ENCODE measurements at regions of chr6 and their contacts with region 1.

Region 1: GRCh38 chr6:40845553-40845952 is 193.5 kb downstream of the UNC5CL start:
- DNase-seq: peak; percentile 59
- H3K4me3 Mint-ChIP-seq: no peak overlapping the region
- H3K27ac Mint-ChIP-seq: no peak overlapping the region
- H3K4me1 Mint-ChIP-seq: no peaks in the 10 kb centered on the region
- H3K27me3 Mint-ChIP-seq: peaks cover 61% of the 10 kb centered on the region
- CTCF ChIP-seq: peak; percentile 66

Region 2: GRCh38 chr6:39361657-39362486 is 1483.7 kb before region 1 on chr6:
- CTCF ChIA-PET with region 1: interaction called, 3 read pairs
- POLR2A ChIA-PET with region 1: no interaction called
- intact Hi-C with region 1: loop called (anchors 5 kb)
- DNase-seq: peak; percentile 70
- H3K4me3 Mint-ChIP-seq: no peak overlapping the region
- H3K27ac Mint-ChIP-seq: no peak overlapping the region
- H3K4me1 Mint-ChIP-seq: peaks cover 14% of the 10 kb centered on the region
- H3K27me3 Mint-ChIP-seq: no peaks in the 10 kb centered on the region
- CTCF ChIP-seq: peak; percentile 78

Region 3: DNA sequence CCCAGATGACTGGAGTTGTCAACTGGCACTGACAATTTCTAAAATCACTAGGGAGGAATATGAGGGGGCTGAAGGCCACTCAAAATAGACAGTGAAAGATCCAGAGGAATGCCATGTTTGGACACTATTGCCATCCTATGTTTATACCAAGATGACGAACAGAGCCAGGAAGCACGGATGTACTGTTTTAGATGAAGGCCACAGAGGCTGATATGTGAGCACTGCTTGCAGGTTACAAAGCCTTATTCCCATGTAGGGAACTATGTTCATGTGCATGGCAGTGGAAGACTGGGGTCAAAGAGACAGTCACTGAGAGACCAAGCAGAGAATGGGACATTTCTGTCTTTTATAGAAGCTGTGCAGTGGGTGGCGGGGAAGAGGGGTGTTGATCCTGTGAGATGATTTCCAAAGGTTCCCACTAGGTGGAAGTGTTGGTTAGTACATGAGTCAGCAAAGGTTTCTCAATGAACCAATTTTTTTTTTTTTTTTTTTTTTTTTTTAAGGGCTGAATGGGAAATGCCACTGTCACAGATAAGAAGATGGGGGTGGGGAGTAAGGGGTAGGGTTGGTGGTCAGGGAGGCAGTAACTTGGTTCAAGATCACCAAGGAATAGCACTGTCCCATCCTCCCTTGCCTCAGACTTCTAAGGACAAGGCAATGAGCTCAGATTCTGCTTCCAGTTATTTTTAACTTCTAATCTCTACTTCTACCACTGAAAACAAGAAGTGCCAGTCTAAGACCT is 864.5 kb before region 1 on chr6:
- CTCF ChIA-PET with region 1: interaction called, 3 read pairs
- POLR2A ChIA-PET with region 1: interaction called, 3 read pairs
- intact Hi-C with region 1: loop called (anchors 1 kb)
- DNase-seq: peak; percentile 63
- H3K4me3 Mint-ChIP-seq: no peak overlapping the region
- H3K27ac Mint-ChIP-seq: no peak overlapping the region
- H3K4me1 Mint-ChIP-seq: no peaks in the 10 kb centered on the region
- H3K27me3 Mint-ChIP-seq: no peaks in the 10 kb centered on the region
- CTCF ChIP-seq: peak; percentile 46

Region 4: GRCh38 chr6:40328405-40328987 is 517.1 kb before region 1 on chr6:
- CTCF ChIA-PET with region 1: interaction called, 17 read pairs
- POLR2A ChIA-PET with region 1: no interaction called
- intact Hi-C with region 1: no loop called
- DNase-seq: peak; percentile 30
- H3K4me3 Mint-ChIP-seq: no peak overlapping the region
- H3K27ac Mint-ChIP-seq: no peak overlapping the region
- H3K4me1 Mint-ChIP-seq: no peaks in the 10 kb centered on the region
- H3K27me3 Mint-ChIP-seq: no peaks in the 10 kb centered on the region
- CTCF ChIP-seq: peak; percentile 40

Region 5: GRCh38 chr6:40856271-40856670 is 10.7 kb after region 1 on chr6:
- CTCF ChIA-PET with region 1: interaction called, 12 read pairs
- POLR2A ChIA-PET with region 1: no interaction called
- intact Hi-C with region 1: no loop called
- DNase-seq: no peak
- H3K4me3 Mint-ChIP-seq: no peak overlapping the region
- H3K27ac Mint-ChIP-seq: no peak overlapping the region
- H3K4me1 Mint-ChIP-seq: no peaks in the 10 kb centered on the region
- H3K27me3 Mint-ChIP-seq: no peaks in the 10 kb centered on the region
- CTCF ChIP-seq: no peak

Region 6: DNA sequence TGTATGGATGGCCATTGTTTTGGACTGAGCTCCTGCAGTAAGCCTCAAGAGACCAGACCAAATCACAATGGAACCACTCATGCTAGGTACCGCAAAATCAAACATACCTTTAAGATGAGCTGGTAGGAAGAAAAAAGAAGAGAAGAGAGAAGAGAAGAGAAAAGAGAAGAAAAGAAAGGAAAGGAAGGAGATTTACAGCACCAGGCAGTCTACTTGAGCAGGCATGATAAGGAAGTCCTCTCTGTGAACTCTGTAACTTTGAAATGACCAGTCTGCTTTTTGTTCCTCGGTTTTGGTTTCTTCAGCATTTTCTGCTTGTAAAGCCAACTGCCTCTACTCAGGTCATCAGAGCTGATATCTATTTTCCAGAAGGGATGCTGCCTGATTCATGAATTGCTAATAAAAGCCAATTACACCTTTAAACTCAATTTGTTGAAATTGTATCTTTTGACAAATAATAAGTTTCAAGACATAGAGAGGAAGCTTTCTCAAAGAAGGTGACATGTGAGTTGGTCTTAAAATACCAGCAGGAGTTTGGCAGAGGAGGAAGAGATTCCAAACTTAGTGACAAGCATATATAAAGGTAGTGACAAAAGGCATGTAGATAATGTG is 59.1 kb after region 1 on chr6:
- CTCF ChIA-PET with region 1: no interaction called
- POLR2A ChIA-PET with region 1: no interaction called
- intact Hi-C with region 1: no loop called
- DNase-seq: no peak
- H3K4me3 Mint-ChIP-seq: no peak overlapping the region
- H3K27ac Mint-ChIP-seq: no peak overlapping the region
- H3K4me1 Mint-ChIP-seq: peaks cover 19% of the 10 kb centered on the region
- H3K27me3 Mint-ChIP-seq: no peaks in the 10 kb centered on the region
- CTCF ChIP-seq: no peak